A549 (cell line): ENCODE measurements at regions of chr20 and their contacts with region 1.

Region 1: DNA sequence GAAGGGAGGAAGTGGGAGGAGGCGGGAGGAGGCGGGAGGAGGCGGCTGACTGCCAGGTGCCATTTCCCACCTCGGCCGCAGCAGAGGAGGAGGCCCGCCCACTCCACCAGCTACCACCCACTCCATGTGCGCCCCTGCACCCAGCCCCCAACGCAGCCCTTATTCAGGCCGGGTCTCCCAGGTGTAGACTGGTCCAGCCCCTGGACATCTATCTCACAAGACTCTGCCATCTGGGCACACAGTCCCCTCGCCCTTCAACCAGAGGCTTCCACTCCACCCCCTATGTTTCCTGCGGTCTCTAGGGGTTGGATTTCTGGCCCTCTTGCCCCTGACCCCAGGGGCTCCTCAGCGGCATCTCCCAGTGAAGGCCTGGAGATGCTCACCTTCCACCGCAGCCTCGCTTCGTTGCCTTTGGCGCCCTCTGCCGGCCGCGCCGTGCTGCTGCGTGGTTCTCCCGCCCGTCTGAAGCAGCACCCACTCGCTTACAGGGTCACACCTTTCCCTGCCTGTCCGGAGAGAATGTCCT is 32.6 kb upstream of the FAM83D start:
- DNase-seq: peak; percentile 63 to 83
- ATAC-seq: peak; percentile 89 to 97
- H3K4me3 ChIP-seq: peak overlapping the region; percentile 37
- H3K27ac ChIP-seq: peak overlapping the region; percentile 53 to 76; a peak in 5 of 6 replicates
- H3K4me1 ChIP-seq: peaks cover 9% of the 10 kb centered on the region; the same call in 1 of the 3 replicates
- CTCF ChIP-seq: peak; percentile 82
- EP300 ChIP-seq: no peak
- POLR2A ChIP-seq: no peak
- RAD21 ChIP-seq: peak; percentile 78 to 89

Region 2: DNA sequence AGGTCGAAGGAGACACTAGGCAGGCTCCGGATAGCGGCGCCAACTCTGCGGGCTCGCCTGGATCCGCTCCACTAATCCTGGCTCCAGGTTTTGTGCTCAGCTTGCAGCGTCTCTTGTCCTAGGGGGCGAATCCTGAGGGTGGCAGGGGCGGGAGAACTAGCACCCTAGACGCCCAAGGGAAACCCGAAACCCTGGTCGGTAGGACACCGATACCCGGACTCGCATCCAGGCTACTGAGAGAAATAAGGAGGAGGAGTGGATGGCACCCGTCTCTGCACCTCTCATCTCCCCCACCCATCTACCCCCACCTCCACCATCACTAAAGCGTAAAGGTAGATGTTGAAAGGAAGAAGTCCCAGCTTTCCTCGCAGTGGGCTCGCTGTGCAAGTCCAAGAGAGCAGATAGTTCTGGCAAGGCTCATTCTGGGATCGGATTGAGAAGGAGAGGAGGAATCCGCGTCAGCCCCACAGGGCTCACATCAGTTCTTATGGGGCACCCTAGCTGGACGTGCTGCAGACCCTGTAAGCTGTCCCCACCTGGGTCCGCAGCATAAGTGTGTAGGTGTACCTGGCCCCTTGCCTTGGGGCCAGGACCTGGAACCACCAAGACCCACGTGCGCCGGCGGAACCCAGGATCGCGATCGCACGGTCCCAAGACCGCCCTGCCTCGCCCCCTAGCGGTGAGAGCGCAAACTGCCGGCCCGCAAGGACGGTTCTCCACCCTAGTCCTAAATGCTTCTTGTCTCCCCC is 162.5 kb before region 1 on chr20:
- CTCF ChIA-PET with region 1: interaction called, 24 read pairs
- POLR2A ChIA-PET with region 1: no interaction called
- DNase-seq: peak; percentile 79 to 93
- ATAC-seq: peak; percentile 79 to 92
- H3K4me3 ChIP-seq: peak overlapping the region; percentile 57
- H3K27ac ChIP-seq: peak overlapping the region; percentile 59; a peak in 5 of 6 replicates
- H3K4me1 ChIP-seq: peaks cover 5% of the 10 kb centered on the region; the same call in 1 of the 3 replicates
- CTCF ChIP-seq: peak; percentile 84
- EP300 ChIP-seq: no peak
- POLR2A ChIP-seq: 0 out of 2 replicates have a peak, but pooled peaks have one; percentile 5
- RAD21 ChIP-seq: peak; percentile 56 to 60

Region 3: GRCh38 chr20:38859070-38859690 is 34.4 kb before region 1 on chr20:
- CTCF ChIA-PET with region 1: interaction called, 10 read pairs
- POLR2A ChIA-PET with region 1: no interaction called
- DNase-seq: no peak
- ATAC-seq: no peak
- H3K4me3 ChIP-seq: no peak overlapping the region
- H3K27ac ChIP-seq: no peak overlapping the region
- H3K4me1 ChIP-seq: no peaks in the 10 kb centered on the region; the same call in 2 of the 3 replicates
- CTCF ChIP-seq: no peak
- EP300 ChIP-seq: no peak
- POLR2A ChIP-seq: no peak
- RAD21 ChIP-seq: no peak

Region 4: GRCh38 chr20:38875175-38875993 is 18.2 kb before region 1 on chr20:
- CTCF ChIA-PET with region 1: interaction called, 84 read pairs
- POLR2A ChIA-PET with region 1: no interaction called
- DNase-seq: no peak
- ATAC-seq: no peak
- H3K4me3 ChIP-seq: no peak overlapping the region
- H3K27ac ChIP-seq: no peak overlapping the region
- H3K4me1 ChIP-seq: peaks cover 32% of the 10 kb centered on the region
- CTCF ChIP-seq: no peak
- EP300 ChIP-seq: no peak
- POLR2A ChIP-seq: no peak
- RAD21 ChIP-seq: no peak

Region 5: DNA sequence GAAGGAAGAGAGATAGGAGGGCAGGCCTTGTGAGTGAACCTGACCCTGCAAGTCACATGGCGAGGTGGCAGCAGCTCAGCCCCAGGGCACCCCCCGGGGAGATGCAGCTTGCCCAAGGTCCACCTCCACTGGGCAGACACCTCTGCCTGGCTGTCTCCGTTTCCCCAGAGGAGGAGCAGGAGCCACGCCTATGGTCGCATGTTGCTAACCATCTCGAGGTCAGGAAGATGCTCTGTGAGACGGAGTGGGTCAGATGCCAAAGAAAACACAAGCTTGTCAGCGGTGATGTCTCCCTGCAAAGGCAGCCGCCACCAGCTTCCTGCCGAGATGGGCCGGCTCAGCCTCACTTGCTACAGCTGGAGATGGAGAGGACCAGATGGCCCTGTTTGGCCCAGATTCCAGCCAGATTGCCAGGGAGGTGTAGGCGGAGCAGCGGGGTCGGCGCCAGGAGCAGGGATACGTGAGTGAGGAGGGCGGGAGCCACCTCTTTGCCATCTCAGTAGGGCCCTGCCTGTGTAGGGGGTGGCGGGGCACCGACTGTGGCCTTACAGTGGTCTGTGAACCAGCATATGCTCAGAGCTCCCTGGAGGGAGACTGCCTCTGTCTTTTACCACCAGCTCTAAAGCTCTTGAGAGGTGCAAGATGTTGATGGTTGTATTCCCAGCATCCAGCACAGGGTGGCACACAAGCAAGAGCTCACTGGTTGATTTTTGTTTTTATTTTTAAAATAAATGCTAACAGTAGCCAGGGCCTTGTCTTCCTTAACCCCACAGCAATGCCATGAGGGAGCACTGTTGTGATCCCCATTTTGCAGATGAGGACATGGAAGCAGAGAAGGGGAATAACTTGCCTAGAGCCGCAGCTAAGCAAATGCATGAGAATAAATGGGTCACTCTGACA is 10.3 kb before region 1 on chr20:
- CTCF ChIA-PET with region 1: interaction called, 84 read pairs
- POLR2A ChIA-PET with region 1: no interaction called
- DNase-seq: no peak
- ATAC-seq: peak; percentile 35 to 58; a peak in 3 of 6 replicates
- H3K4me3 ChIP-seq: no peak overlapping the region
- H3K27ac ChIP-seq: no peak overlapping the region
- H3K4me1 ChIP-seq: peaks cover 10% of the 10 kb centered on the region; the same call in 1 of the 3 replicates
- CTCF ChIP-seq: no peak
- EP300 ChIP-seq: no peak
- POLR2A ChIP-seq: no peak
- RAD21 ChIP-seq: no peak

Region 6: GRCh38 chr20:38907918-38908677 is 14.5 kb after region 1 on chr20:
- CTCF ChIA-PET with region 1: interaction called, 11 read pairs
- POLR2A ChIA-PET with region 1: no interaction called
- DNase-seq: no peak
- ATAC-seq: peak; percentile 20 to 40; a peak in 2 of 6 replicates
- H3K4me3 ChIP-seq: no peak overlapping the region
- H3K27ac ChIP-seq: no peak overlapping the region
- H3K4me1 ChIP-seq: peaks cover 9% of the 10 kb centered on the region
- CTCF ChIP-seq: no peak
- EP300 ChIP-seq: no peak
- POLR2A ChIP-seq: no peak
- RAD21 ChIP-seq: no peak